Naive thymus-derived CD4-positive, alpha-beta T cell (primary cell): ENCODE measurements at regions of chr12 and their contacts with region 1.

Region 1: DNA sequence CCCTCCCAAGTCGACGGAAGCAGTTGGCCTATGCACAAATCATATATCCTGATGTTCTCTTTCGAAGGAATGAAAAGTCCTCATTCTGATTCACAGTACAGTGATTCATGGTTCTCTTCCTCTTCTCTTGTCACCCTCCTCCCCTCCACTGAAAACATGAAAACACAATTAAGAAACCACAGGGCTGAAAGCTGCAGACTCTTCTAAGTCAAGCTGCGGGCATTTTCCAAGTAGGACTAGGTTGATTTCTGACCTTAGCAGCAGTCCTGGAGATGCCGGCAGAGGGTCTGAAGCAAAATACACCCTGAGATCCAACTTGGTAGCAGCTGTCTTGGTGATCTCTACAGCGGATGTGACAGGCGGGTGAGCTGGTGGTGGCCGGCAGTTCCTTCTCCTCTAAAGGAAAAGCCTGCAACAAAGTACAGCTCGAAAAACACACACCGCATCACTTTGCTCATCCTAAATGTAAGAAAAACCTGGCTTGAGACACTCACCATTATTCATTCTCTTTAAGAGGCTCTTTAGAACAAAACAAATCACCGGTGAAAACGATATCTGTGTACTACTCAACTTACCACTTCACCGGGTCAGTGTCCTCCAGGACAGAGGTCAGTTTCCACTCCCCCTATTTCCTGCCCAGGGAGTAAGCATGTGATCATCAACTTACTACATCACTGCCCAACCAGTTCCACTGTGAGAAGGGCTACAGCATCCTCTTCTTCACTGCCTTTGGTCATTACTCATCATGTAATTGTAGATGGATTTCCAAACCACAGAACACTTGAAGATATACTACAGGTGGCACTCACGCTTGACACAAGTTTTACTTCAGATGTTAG is 6.0 kb downstream of the TMCC3 start:
- DNase-seq: peak in 1 of 9 donors; percentile 26
- ATAC-seq: peak; percentile 71
- H3K4me3 ChIP-seq: no peak overlapping the region
- H3K4me3 Mint-ChIP-seq: peak overlapping the region in 6 of 10 donors; percentile 4 to 67 (median 42)
- H3K27ac ChIP-seq: no peak overlapping the region
- H3K27ac Mint-ChIP-seq: peak overlapping the region in 2 of 9 donors; percentile 0 to 62
- H3K4me1 ChIP-seq: no peaks in the 10 kb centered on the region
- H3K4me1 Mint-ChIP-seq: peaks cover 14 to 42% (median 21%) of the 10 kb centered on the region in 7 donors
- H3K27me3 ChIP-seq: peaks cover 3 to 11% of the 10 kb centered on the region in 2 donors
- H3K27me3 Mint-ChIP-seq: peaks cover 27 to 86% (median 41%) of the 10 kb centered on the region in 5 donors

Region 2: DNA sequence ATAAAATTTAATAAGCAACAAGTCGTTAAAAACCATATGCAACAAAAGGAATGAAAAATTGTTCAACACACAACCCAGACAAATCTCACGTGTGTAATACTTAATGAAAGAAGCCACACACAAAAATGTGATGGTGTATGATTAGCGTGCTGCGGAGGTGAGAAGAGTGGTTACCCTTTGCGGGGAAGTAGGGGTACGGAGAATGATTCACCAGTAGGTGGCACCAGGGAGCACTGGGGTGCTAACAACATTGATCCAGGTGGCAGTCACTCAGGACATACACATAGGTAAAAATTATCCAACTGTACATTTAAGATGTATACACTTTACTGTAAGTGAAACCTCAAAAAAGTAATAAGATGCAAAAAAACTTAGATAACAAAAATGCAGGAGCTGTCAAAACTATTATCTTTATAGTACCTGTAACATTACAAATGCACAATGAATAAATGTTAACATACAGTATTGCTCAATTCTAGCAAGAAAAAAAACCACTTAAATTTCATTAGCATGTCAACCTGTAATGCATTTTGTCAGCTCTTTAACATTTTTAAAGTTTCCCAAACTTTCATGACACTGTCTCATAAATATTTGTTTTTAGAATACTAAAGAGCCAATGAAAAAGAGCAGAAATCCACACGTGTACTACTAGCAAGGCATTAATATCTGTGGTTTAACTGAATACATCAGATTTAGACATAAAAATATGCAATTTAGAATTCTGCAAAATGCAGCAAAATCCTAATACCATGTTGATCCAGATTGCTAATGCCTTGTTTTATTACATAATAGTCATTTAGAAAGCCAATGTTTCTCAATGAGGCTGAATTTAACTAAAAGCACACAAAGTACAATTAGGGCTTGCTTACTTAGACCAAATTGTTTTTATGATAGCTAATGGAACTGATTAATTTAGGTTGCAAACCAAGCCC is 40.7 kb before region 1 on chr12:
- CTCF ChIA-PET with region 1: no interaction called
- POLR2A ChIA-PET with region 1: interaction called, 4 read pairs
- intact Hi-C with region 1: loop called in 1 of 2 experiments (anchors 5 kb)
- DNase-seq: peak in 7 of 9 donors; percentile 16 to 58 (median 37)
- ATAC-seq: peak; percentile 80
- H3K4me3 ChIP-seq: no peak overlapping the region
- H3K4me3 Mint-ChIP-seq: no peak overlapping the region
- H3K27ac ChIP-seq: no peak overlapping the region
- H3K27ac Mint-ChIP-seq: no peak overlapping the region
- H3K4me1 ChIP-seq: no peaks in the 10 kb centered on the region
- H3K4me1 Mint-ChIP-seq: peaks cover 0 to 7% (median 0%) of the 10 kb centered on the region in 7 donors
- H3K27me3 ChIP-seq: no peaks in the 10 kb centered on the region
- H3K27me3 Mint-ChIP-seq: peaks cover 3 to 41% (median 8%) of the 10 kb centered on the region in 5 donors

Region 3: GRCh38 chr12:94621664-94622359 is 22.5 kb before region 1 on chr12:
- CTCF ChIA-PET with region 1: no interaction called
- POLR2A ChIA-PET with region 1: no interaction called
- intact Hi-C with region 1: loop called in 1 of 2 experiments (anchors 1 kb)
- DNase-seq: peak in 4 of 9 donors; percentile 10 to 29 (median 15)
- ATAC-seq: peak; percentile 86
- H3K4me3 ChIP-seq: peak overlapping the region; percentile 40
- H3K4me3 Mint-ChIP-seq: peak overlapping the region; percentile 65 to 87 (median 77)
- H3K27ac ChIP-seq: no peak overlapping the region
- H3K27ac Mint-ChIP-seq: peak overlapping the region in 8 of 9 donors; percentile 37 to 88 (median 69)
- H3K4me1 ChIP-seq: peaks cover 6 to 7% of the 10 kb centered on the region in 2 donors
- H3K4me1 Mint-ChIP-seq: peaks cover 10 to 20% (median 16%) of the 10 kb centered on the region in 7 donors
- H3K27me3 ChIP-seq: no peaks in the 10 kb centered on the region
- H3K27me3 Mint-ChIP-seq: no peaks in the 10 kb centered on the region

Region 4: GRCh38 chr12:94704452-94705306 is 60.3 kb after region 1 on chr12:
- CTCF ChIA-PET with region 1: no interaction called
- POLR2A ChIA-PET with region 1: no interaction called
- intact Hi-C with region 1: no loop called
- DNase-seq: no peak
- ATAC-seq: no peak
- H3K4me3 ChIP-seq: no peak overlapping the region
- H3K4me3 Mint-ChIP-seq: no peak overlapping the region
- H3K27ac ChIP-seq: no peak overlapping the region
- H3K27ac Mint-ChIP-seq: no peak overlapping the region
- H3K4me1 ChIP-seq: no peaks in the 10 kb centered on the region
- H3K4me1 Mint-ChIP-seq: peaks cover 0 to 1% (median 0%) of the 10 kb centered on the region in 7 donors
- H3K27me3 ChIP-seq: no peaks in the 10 kb centered on the region
- H3K27me3 Mint-ChIP-seq: peaks cover 0 to 26% (median 4%) of the 10 kb centered on the region in 5 donors

Region 5: GRCh38 chr12:95358111-95359083 is 714.0 kb after region 1 on chr12:
- CTCF ChIA-PET with region 1: no interaction called
- POLR2A ChIA-PET with region 1: no interaction called
- intact Hi-C with region 1: no loop called
- DNase-seq: no peak
- ATAC-seq: no peak
- H3K4me3 ChIP-seq: no peak overlapping the region
- H3K4me3 Mint-ChIP-seq: no peak overlapping the region
- H3K27ac ChIP-seq: no peak overlapping the region
- H3K27ac Mint-ChIP-seq: no peak overlapping the region
- H3K4me1 ChIP-seq: no peaks in the 10 kb centered on the region
- H3K4me1 Mint-ChIP-seq: peaks cover 0 to 7% (median 0%) of the 10 kb centered on the region in 7 donors
- H3K27me3 ChIP-seq: no peaks in the 10 kb centered on the region
- H3K27me3 Mint-ChIP-seq: no peaks in the 10 kb centered on the region